G401 (cell line): ENCODE measurements at regions of chr13 and their contacts with region 1.

Region 1: DNA sequence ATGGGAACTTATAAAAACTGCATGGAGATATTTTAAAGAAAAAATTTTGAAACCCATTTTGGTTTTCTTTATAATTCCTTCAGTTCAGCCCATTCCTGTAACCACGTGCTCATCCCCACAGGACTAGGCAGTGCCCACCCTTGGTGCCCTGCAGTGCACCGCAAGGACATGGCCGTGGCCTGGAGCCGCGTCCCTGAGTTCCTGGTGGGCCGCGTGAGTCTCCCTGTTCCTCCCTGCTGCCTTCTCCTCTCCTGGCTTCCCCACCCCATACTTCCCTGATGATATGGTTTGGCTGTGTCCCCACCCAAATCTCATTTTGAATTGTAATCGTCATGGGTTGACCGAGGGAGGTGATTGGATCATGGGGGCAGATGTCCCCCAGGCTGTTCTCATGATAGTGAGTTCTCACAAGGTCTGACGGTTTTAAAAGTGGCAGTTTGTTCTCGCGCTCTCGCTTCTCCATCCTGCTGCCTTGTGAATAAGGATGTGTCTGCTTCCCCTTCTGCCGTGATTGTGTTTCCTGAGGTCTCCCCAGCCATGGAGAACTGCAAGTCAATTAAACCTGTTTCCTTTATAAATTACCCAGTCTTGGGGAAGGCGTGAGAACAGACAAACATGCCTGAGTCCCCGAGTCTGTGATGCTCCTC is 31.6 kb upstream of the TFDP1 start:
- DNase-seq: no peak

Region 2: DNA sequence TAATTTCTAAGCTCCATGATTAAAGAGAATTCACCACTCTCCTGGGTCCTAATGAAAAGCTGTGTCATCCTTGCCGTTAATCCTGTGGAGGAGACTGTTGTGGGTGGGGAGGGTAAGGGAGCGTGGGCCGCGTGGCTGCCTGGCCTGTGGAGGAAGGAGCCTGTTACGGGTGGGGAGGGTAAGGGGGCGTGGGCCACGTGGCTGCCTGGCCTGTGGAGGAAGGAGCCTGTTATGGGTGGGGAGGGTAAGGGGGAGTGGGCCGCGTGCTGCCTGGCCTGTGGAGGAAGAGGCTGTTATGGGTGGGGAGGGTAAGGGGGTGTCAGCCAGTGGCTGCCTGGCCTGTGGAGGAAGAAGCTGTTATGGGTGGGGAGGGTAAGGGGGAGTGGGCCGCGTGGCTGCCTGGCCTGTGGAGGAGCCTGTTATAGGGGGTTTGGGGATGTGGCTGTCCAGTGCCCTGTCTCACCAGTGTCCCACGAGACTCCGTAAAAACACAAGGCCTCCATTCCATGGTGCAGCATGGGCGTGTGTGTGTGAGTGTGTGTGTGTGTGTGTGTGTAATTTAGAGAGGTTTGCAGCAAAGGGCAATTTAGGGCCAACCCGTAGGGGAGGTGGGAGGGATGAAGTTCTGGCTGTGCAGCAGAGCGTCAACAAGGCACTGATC is 46.8 kb before region 1 on chr13:
- in situ Hi-C with region 1: loop called (anchors 10 kb)
- DNase-seq: no peak